BJ (cell line): ENCODE measurements at regions of chr3 and their contacts with region 1.

Region 1: DNA sequence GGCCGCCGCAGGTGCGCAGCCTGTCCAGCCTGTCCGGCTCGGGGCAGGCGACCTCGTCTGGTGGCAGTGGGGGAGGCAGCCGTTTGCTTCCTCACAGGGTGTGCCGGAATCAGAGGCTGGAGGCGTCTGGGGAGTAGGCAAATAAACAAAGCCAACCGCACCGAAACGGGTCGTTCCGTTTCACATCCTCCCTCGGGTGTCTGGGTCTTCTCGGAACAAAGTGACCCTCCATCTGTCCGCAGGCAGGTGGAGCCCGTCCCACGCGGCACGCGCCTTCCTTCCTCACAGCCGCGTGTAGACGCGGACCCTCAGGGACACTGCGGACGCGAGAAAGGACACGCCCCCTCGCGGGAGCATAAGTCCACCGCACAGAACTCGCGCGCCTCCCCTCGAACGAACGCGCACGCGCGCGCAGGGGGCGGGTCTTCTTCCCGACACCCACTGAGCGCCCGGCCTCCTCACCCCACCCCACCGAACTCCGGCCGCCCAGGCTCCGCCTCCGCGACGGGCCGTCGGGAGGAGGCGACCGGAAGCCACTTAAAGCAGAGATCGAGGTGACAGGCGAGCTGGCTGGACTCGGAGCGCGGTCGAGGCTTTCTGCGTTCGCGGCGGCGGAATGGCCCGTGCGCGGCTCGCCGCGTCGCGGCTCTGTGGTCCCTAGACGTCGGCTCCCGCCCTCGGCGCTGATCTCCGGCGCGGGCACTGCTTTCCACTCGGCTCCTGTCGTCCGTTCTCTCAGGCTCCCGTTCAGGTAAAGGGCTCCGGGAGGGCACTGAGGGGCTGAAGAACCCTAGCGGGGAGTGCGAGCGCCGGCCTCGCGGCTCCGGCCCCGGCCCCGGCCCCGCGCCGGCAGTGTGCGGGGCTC is at the start of gene TIPARP:
- DNase-seq: peak; percentile 86
- H3K4me3 ChIP-seq: peak within 1 kb of the TSS; percentile 92
- H3K27me3 ChIP-seq: no peaks in the 10 kb centered on the region
- CTCF ChIP-seq: peak; percentile 70
- polyA plus RNA-seq, gene TIPARP: 23.0 and 30.9 TPM in 2 replicates

Region 2: GRCh38 chr3:156535162-156535627 is 139.1 kb before region 1 on chr3:
- CTCF ChIA-PET with region 1: interaction called, 11 read pairs
- POLR2A ChIA-PET with region 1: no interaction called
- DNase-seq: peak; percentile 95
- H3K4me3 ChIP-seq: no peak overlapping the region
- H3K27me3 ChIP-seq: no peaks in the 10 kb centered on the region
- CTCF ChIP-seq: peak; percentile 32; the same call in 1 of the 2 replicates

Region 3: GRCh38 chr3:157081681-157082210 is 407.5 kb after region 1 on chr3:
- CTCF ChIA-PET with region 1: interaction called, 54 read pairs
- POLR2A ChIA-PET with region 1: no interaction called
- DNase-seq: peak; percentile 81
- H3K4me3 ChIP-seq: no peak overlapping the region
- H3K27me3 ChIP-seq: no peaks in the 10 kb centered on the region
- CTCF ChIP-seq: peak; percentile 96

Region 4: DNA sequence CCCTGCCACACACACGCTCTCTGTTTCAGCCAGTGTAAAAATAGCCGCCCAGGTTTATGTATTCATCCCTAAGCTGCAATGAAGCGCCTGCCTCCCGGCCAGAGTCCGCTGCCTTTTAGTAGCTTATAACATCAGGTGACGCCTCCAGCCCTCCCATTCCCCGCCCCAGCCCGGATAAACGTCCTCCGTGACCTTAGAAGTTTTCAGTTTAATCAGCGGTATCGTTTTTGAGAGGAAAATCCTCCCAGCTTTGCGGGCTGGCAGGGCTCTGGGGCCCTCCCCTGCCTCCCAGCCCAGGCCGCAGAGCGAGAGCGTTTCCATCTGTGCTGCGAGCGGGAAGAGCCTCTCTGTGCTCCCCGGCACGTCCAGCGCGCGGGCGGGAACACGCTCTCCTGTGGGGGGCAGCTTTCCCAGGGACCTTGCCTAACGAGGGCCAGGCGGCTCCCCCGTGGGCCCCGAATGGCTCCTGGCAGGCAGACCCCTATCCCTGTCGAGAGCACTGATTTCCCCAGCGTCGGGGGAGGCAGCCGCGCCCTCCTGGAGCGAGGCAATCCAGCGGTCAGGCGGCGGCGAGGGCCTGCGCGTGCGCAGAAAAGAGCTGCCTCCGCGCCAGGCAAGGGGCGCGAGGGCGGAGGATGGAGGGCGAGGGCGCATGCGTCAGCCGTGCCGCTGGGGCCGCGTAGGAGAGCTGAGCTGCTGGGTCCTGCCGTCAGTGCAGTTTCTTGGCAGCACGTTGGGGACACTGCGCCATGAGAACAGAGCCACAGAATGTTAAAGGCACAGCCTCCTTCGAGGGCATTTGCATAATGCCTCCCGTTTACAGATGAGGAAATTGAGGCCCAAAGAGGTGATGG is 414.6 kb after region 1 on chr3:
- CTCF ChIA-PET with region 1: interaction called, 17 read pairs
- POLR2A ChIA-PET with region 1: interaction called, 3 read pairs
- DNase-seq: peak; percentile 69
- H3K4me3 ChIP-seq: peak overlapping the region; percentile 54
- H3K27me3 ChIP-seq: no peaks in the 10 kb centered on the region
- CTCF ChIP-seq: peak; percentile 25; the same call in 1 of the 2 replicates

Region 5: GRCh38 chr3:157130467-157131251 is 456.4 kb after region 1 on chr3:
- CTCF ChIA-PET with region 1: interaction called, 37 read pairs
- POLR2A ChIA-PET with region 1: no interaction called
- DNase-seq: no peak
- H3K4me3 ChIP-seq: no peak overlapping the region
- H3K27me3 ChIP-seq: no peaks in the 10 kb centered on the region
- CTCF ChIP-seq: peak; percentile 60

Region 6: GRCh38 chr3:157136647-157137387 is 462.5 kb after region 1 on chr3:
- CTCF ChIA-PET with region 1: interaction called, 37 read pairs
- POLR2A ChIA-PET with region 1: interaction called, 3 read pairs
- DNase-seq: no peak
- H3K4me3 ChIP-seq: no peak overlapping the region
- H3K27me3 ChIP-seq: no peaks in the 10 kb centered on the region
- CTCF ChIP-seq: no peak

Region 7: GRCh38 chr3:157429708-157430107 is 755.4 kb after region 1 on chr3:
- CTCF ChIA-PET with region 1: no interaction called
- POLR2A ChIA-PET with region 1: no interaction called
- DNase-seq: no peak
- H3K4me3 ChIP-seq: no peak overlapping the region
- H3K27me3 ChIP-seq: no peaks in the 10 kb centered on the region
- CTCF ChIP-seq: no peak